MCF 10A (cell line): ENCODE measurements at regions of chr3 and their contacts with region 1.

Region 1: GRCh38 chr3:45037734-45038455 is 11.8 kb downstream of the CLEC3B start:
- DNase-seq: peak; percentile 97
- H3K4me3 Mint-ChIP-seq: no peak overlapping the region
- H3K27ac Mint-ChIP-seq: no peak overlapping the region
- H3K4me1 Mint-ChIP-seq: peaks cover 4% of the 10 kb centered on the region
- H3K27me3 Mint-ChIP-seq: no peaks in the 10 kb centered on the region
- CTCF ChIP-seq: peak; percentile 82

Region 2: DNA sequence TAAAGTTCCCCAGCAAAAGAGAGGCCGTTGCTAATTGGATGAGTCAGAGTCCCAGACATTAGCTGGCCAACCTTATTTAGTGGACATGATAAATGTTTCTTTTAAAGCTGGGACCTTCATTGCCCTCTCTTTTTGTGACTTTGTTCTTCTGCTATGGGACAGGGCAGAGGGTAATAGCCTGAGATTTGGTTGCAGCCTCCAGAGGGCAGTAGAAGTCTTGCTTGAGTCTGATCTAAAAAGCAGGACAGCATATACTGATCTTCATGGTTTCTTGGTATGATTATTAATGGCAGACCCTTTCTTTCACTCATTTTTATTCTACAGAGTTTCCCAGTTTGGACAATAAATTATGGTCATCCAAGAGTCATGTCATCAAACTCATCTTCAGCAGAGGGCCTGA is 508.0 kb before region 1 on chr3:
- CTCF ChIA-PET with region 1: interaction called, 5 read pairs
- POLR2A ChIA-PET with region 1: no interaction called
- intact Hi-C with region 1: loop called (anchors 1 kb)
- DNase-seq: peak; percentile 3
- H3K4me3 Mint-ChIP-seq: no peak overlapping the region
- H3K27ac Mint-ChIP-seq: no peak overlapping the region
- H3K4me1 Mint-ChIP-seq: no peaks in the 10 kb centered on the region
- H3K27me3 Mint-ChIP-seq: peaks cover 37% of the 10 kb centered on the region
- CTCF ChIP-seq: no peak

Region 3: GRCh38 chr3:45092132-45093031 is 54.5 kb after region 1 on chr3:
- CTCF ChIA-PET with region 1: interaction called, 27 read pairs
- POLR2A ChIA-PET with region 1: interaction called, 3 read pairs
- intact Hi-C with region 1: loop called (anchors 1 kb)
- DNase-seq: peak; percentile 71
- H3K4me3 Mint-ChIP-seq: no peak overlapping the region
- H3K27ac Mint-ChIP-seq: peak overlapping the region; percentile 87
- H3K4me1 Mint-ChIP-seq: peaks cover 18% of the 10 kb centered on the region
- H3K27me3 Mint-ChIP-seq: no peaks in the 10 kb centered on the region
- CTCF ChIP-seq: no peak

Region 4: DNA sequence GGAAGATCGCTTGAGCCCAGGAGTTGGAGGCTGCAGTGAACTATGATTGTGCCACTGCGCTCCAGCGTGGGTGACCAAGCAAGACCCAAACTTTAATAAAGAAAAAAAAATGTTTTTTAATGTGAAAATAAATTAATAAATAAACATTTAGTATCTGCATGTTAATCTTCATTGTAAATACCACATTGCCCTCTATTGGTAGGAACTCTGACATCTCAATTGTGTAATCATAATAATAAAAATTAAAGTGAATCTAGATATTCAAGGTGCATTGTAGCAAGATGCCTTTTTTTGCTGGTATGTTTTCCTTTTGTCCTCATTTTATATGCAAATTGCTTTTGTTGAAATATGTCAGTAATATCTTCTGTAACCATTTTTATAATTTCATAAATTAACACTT is 461.6 kb after region 1 on chr3:
- CTCF ChIA-PET with region 1: interaction called, 77 read pairs
- POLR2A ChIA-PET with region 1: interaction called, 4 read pairs
- intact Hi-C with region 1: loop called (anchors 1 kb)
- DNase-seq: peak; percentile 53
- H3K4me3 Mint-ChIP-seq: no peak overlapping the region
- H3K27ac Mint-ChIP-seq: no peak overlapping the region
- H3K4me1 Mint-ChIP-seq: no peaks in the 10 kb centered on the region
- H3K27me3 Mint-ChIP-seq: no peaks in the 10 kb centered on the region
- CTCF ChIP-seq: peak; percentile 46

Region 5: GRCh38 chr3:45507820-45508317 is 470.0 kb after region 1 on chr3:
- CTCF ChIA-PET with region 1: interaction called, 14 read pairs
- POLR2A ChIA-PET with region 1: interaction called, 3 read pairs
- intact Hi-C with region 1: loop called (anchors 5 kb)
- DNase-seq: no peak
- H3K4me3 Mint-ChIP-seq: no peak overlapping the region
- H3K27ac Mint-ChIP-seq: no peak overlapping the region
- H3K4me1 Mint-ChIP-seq: no peaks in the 10 kb centered on the region
- H3K27me3 Mint-ChIP-seq: no peaks in the 10 kb centered on the region
- CTCF ChIP-seq: no peak